Heart right ventricle (tissue), 16 donors: ENCODE measurements at regions of chr11 and their contacts with region 1.

Region 1: DNA sequence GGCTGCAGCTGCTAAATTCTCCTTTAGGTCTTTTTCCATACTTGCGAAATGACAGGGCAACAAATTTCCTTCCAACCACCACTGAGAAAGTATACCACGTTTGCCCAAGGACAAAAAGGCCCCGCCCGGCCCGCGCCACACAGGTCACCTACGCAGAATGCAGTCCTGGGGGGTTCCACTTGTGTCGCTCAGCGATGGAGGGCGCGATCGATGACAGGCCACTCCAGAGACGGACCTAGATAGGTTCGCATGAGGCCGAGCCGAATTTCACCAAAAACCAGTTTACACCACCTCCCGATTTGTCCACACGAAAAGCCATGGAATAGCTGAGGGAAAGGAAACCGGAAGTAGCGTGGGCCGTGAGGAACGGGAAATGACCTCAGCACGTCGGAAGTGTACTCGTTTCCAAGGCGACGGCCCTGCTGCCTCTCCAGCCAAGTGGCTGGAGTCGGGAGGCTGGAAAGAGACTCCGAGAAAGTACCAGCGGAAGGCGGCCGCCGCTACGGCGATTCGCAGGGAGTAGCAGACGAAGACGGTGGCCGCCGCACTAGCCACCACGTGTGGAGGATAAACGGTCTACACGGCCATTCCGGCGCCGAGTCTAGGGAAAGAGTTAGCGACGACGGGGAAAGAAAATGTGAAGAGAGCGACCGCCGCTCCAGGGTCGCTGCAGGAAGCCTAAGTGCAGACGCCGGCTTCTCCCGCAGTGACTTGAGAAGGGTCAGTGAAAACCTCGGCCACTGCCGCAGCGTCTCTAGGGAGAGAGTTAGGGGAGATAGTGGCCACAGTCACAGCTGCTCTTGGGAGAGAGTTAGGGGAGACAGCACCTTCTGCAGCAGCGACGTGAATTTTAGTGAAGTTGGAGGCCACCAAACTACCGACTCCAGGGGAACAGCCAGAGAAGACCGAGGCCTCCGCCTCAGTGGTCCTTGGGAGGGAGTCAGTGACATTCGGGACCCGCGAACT is at the start of gene ANKRD42:
- DNase-seq: peak; percentile 88 to 96
- ATAC-seq: peak; percentile 97 to 99 (median 98)
- H3K4me3 ChIP-seq: peak within 1 kb of the TSS; percentile 63 to 90 (median 80)
- H3K27ac ChIP-seq: peak within 1 kb of the TSS; percentile 37 to 96 (median 90)
- H3K4me1 ChIP-seq: peaks cover 7 to 39% (median 30%) of the 10 kb centered on the region in 9 donors
- H3K27me3 ChIP-seq: no peaks in the 10 kb centered on the region
- CTCF ChIP-seq: no peak
- total RNA-seq, gene ANKRD42: 3.7 to 10.7 (median 6.4) TPM

Region 2: GRCh38 chr11:83079820-83080219 is 113.8 kb before region 1 on chr11:
- intact Hi-C with region 1: loop called in 2 of 10 experiments (anchors 5 to 10 kb)
- DNase-seq: no peak
- ATAC-seq: no peak
- H3K4me3 ChIP-seq: no peak overlapping the region
- H3K27ac ChIP-seq: no peak overlapping the region
- H3K4me1 ChIP-seq: peaks cover 0 to 9% (median 0%) of the 10 kb centered on the region in 9 donors
- H3K27me3 ChIP-seq: no peaks in the 10 kb centered on the region
- CTCF ChIP-seq: no peak